ENCODE measurements at regions of chr2 and their contacts with region 1.

Region 1: GRCh38 chr2:134739879-134740301 is 21.1 kb upstream of the TMEM163 start:
- DNase-seq: peak; percentile 62
- ATAC-seq: peak; percentile 88
- H3K4me3 Mint-ChIP-seq: peak overlapping the region; percentile 49
- H3K27ac Mint-ChIP-seq: peak overlapping the region; percentile 97
- H3K4me1 Mint-ChIP-seq: peaks cover 71% of the 10 kb centered on the region
- H3K27me3 Mint-ChIP-seq: no peaks in the 10 kb centered on the region
- CTCF ChIP-seq: no peak

Region 2: GRCh38 chr2:133953524-133953923 is 786.4 kb before region 1 on chr2:
- CTCF ChIA-PET with region 1: no interaction called
- POLR2A ChIA-PET with region 1: no interaction called
- intact Hi-C with region 1: loop called (anchors 10 kb)
- DNase-seq: peak; percentile 44
- ATAC-seq: peak; percentile 84
- H3K4me3 Mint-ChIP-seq: peak overlapping the region; percentile 46
- H3K27ac Mint-ChIP-seq: peak overlapping the region; percentile 78
- H3K4me1 Mint-ChIP-seq: peaks cover 83% of the 10 kb centered on the region
- H3K27me3 Mint-ChIP-seq: no peaks in the 10 kb centered on the region
- CTCF ChIP-seq: no peak

Region 3: DNA sequence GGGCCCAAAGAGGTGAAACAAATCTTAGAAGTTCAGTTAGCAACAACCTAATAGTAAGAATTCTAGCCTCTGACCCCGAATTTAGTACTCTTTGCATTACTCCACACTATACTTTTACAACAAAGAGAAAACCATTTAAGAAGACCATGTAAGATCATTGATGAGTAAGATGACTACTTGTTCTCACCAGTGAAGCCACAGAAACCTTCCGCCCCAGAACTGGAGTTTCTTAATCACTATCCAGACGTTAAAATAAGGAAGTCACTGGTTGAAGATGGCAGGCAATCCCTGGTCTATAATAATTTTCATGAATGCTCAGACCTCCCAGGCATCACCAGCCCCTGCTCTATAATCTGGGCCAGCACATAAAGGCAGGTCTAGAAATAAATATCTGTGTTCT is 116.1 kb before region 1 on chr2:
- CTCF ChIA-PET with region 1: no interaction called
- POLR2A ChIA-PET with region 1: no interaction called
- intact Hi-C with region 1: loop called (anchors 1 kb)
- DNase-seq: no peak
- ATAC-seq: peak; percentile 69
- H3K4me3 Mint-ChIP-seq: peak overlapping the region; percentile 71
- H3K27ac Mint-ChIP-seq: peak overlapping the region; percentile 91
- H3K4me1 Mint-ChIP-seq: peaks cover 28% of the 10 kb centered on the region
- H3K27me3 Mint-ChIP-seq: no peaks in the 10 kb centered on the region
- CTCF ChIP-seq: no peak

Region 4: DNA sequence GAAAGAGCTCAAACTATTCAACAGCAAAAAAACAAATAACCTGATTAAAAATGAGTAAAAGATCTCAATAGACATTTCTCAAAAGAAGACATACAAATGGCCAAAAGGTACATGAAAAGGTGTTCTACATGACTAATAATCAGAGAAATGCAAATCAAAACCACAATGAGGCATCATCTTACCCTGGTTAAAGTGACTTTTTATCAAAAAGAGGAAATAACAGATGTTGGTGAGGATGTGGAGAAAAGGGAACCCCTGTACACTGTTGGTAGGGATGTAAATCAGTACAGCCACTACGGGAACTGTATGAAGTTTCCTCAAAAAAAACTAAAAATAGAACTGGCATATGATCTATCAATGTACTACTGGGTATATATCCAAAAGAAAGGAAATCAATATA is 18.7 kb after region 1 on chr2:
- CTCF ChIA-PET with region 1: interaction called, 4 read pairs
- POLR2A ChIA-PET with region 1: interaction called, 37 read pairs
- intact Hi-C with region 1: loop called (anchors 1 kb)
- DNase-seq: no peak
- ATAC-seq: peak; percentile 95
- H3K4me3 Mint-ChIP-seq: peak overlapping the region; percentile 16
- H3K27ac Mint-ChIP-seq: peak overlapping the region; percentile 74
- H3K4me1 Mint-ChIP-seq: peaks cover 30% of the 10 kb centered on the region
- H3K27me3 Mint-ChIP-seq: no peaks in the 10 kb centered on the region
- CTCF ChIP-seq: no peak

Region 5: GRCh38 chr2:135052042-135052876 is 312.4 kb after region 1 on chr2 and contains the start of gene RAB3GAP1:
- CTCF ChIA-PET with region 1: no interaction called
- POLR2A ChIA-PET with region 1: interaction called, 4 read pairs
- intact Hi-C with region 1: loop called (anchors 10 kb)
- DNase-seq: peak; percentile 72
- ATAC-seq: peak; percentile 89
- H3K4me3 Mint-ChIP-seq: peak within 1 kb of the TSS; percentile 99
- H3K27ac Mint-ChIP-seq: peak within 1 kb of the TSS; percentile 99
- H3K4me1 Mint-ChIP-seq: peaks cover 40% of the 10 kb centered on the region
- H3K27me3 Mint-ChIP-seq: no peaks in the 10 kb centered on the region
- CTCF ChIP-seq: no peak
- total RNA-seq, gene RAB3GAP1: 46.3 and 51.0 TPM in 2 replicates

Measured in activated B cell treated with CpG ODN at 0.5 μM for 24 hours (primary cell).